ENCODE measurements at regions of chr22 and their contacts with region 1.

Region 1: GRCh38 chr22:24768537-24769374 is 5.8 kb downstream of the PIWIL3 start:
- DNase-seq: no peak
- ATAC-seq: peak; percentile 49
- H3K4me3 Mint-ChIP-seq: no peak overlapping the region
- H3K27ac Mint-ChIP-seq: no peak overlapping the region
- H3K4me1 Mint-ChIP-seq: no peaks in the 10 kb centered on the region
- H3K27me3 Mint-ChIP-seq: peaks cover 3% of the 10 kb centered on the region
- CTCF ChIP-seq: no peak

Region 2: DNA sequence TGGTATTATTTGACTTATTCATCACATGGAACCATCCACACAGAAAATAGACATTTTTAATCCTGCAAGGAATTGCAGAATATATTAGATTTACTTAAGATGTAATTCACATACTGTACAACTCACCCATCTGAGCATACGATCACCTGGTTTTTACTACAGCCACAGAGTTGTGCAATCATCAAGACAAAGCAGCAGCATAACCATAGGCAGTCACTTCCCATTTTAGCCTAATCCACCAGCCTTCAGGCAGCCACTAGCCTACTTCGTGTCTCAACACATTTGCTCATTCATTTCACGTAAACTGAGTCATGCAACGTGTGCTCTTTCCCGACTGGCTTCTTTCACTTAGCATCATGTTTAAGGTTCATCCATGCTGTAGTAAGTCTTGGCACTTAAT is 17.2 kb before region 1 on chr22:
- CTCF ChIA-PET with region 1: no interaction called
- POLR2A ChIA-PET with region 1: no interaction called
- intact Hi-C with region 1: no loop called
- DNase-seq: no peak
- ATAC-seq: no peak
- H3K4me3 Mint-ChIP-seq: no peak overlapping the region
- H3K27ac Mint-ChIP-seq: no peak overlapping the region
- H3K4me1 Mint-ChIP-seq: no peaks in the 10 kb centered on the region
- H3K27me3 Mint-ChIP-seq: peaks cover 21% of the 10 kb centered on the region
- CTCF ChIP-seq: no peak

Region 3: DNA sequence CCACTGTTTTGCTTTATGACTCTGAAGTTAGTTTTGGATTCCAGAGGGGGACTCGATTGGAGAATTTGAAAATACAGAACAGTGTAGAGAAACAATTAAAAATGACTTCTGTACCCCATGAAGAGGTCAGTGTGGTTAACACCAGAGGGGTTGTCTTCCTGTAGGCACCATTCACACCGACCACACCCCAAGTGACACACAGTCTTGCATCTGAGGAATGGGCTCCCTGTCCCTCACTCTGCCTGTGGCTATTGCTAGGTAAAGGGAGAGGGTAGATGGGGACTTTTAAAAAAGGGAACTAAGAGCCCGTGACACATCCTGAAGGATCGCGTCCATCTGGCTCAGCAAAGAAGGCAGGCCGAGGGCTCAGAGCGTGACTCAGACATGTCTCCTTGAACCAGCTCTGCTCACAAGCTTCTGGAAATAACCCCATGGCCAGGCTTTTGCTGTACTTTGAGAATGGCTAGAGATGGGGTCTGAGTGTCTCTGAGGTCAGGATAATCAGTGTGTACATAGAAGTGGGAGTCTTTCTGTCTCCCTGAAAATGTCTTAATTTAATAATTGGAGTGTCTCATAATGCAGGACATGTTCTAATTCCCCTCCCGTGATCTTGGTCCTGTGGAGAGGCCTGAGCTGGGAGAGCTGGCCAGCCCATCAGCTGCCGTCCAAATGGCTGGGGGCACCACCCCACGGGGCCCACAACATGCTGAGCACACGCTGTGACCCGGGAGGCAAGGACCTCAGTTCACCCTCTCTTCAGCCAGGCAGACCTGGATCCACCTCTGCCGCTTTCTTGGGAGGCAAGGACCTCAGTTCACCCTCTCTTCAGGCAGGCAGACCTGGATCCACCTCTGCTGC is 76.5 kb after region 1 on chr22:
- CTCF ChIA-PET with region 1: interaction called, 35 read pairs
- POLR2A ChIA-PET with region 1: no interaction called
- intact Hi-C with region 1: no loop called
- DNase-seq: no peak
- ATAC-seq: no peak
- H3K4me3 Mint-ChIP-seq: no peak overlapping the region
- H3K27ac Mint-ChIP-seq: no peak overlapping the region
- H3K4me1 Mint-ChIP-seq: no peaks in the 10 kb centered on the region
- H3K27me3 Mint-ChIP-seq: peaks cover 18% of the 10 kb centered on the region
- CTCF ChIP-seq: no peak

Region 4: DNA sequence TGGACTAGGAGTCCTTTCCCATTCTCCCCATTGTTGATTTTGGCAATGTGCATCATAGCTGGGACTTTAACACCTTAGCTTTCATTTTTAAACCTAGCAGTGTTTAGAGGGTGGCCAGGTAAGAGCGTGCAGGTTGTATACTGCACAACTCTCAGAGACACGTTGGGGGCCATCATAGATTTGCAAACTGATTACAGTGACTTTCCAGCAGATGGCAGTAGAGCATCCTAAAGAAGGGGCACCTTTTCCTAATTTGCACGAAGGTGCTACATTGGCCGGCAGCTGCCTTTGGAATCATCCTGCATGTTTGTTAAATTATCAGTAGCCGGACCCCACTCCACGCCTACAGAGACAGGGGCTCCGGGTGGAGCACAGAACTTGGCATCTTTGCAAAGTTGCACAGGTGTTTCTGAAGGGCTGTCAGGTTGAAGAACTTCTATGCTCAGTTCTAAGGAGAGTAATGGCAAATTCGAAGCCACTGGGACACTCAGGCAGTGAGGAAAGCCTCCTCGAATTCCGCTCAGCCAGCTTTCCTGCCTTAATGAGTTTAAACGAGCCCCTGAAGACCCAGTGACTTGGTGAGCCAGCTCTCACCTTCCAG is 170.1 kb after region 1 on chr22:
- CTCF ChIA-PET with region 1: no interaction called
- POLR2A ChIA-PET with region 1: no interaction called
- intact Hi-C with region 1: loop called (anchors 2 kb)
- DNase-seq: no peak
- ATAC-seq: no peak
- H3K4me3 Mint-ChIP-seq: no peak overlapping the region
- H3K27ac Mint-ChIP-seq: no peak overlapping the region
- H3K4me1 Mint-ChIP-seq: no peaks in the 10 kb centered on the region
- H3K27me3 Mint-ChIP-seq: peaks cover 2% of the 10 kb centered on the region
- CTCF ChIP-seq: peak; percentile 29

Region 5: GRCh38 chr22:25048659-25049647 is 280.2 kb after region 1 on chr22:
- CTCF ChIA-PET with region 1: interaction called, 23 read pairs
- POLR2A ChIA-PET with region 1: no interaction called
- intact Hi-C with region 1: no loop called
- DNase-seq: peak; percentile 37
- ATAC-seq: peak; percentile 57
- H3K4me3 Mint-ChIP-seq: no peak overlapping the region
- H3K27ac Mint-ChIP-seq: no peak overlapping the region
- H3K4me1 Mint-ChIP-seq: no peaks in the 10 kb centered on the region
- H3K27me3 Mint-ChIP-seq: peaks cover 5% of the 10 kb centered on the region
- CTCF ChIP-seq: peak; percentile 34

Measured in activated B cell treated with CpG ODN at 0.5 μM for 24 hours (primary cell).